CD8-positive, alpha-beta T cell (primary cell): ENCODE measurements at regions of chrX and their contacts with region 1.

Region 1: DNA sequence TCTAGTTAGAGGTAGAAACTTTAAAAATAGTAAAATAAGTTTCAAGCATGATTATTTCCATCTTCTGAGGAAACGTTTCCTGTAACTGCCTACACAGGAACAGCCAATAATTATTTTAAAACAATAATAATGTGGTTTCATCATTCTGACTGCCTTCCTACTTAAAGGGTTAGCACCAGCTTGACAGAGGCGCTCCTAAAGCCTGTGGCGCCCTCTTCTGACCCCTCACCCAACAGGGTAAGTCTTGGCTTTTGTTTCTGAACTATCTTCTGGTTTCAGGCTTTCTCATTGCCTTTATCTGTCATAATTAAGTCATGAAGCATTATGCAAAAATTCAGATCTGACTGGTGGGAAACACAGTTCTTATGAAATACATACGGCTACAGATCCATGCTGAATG is 96.7 kb downstream of the ITM2A start:
- DNase-seq: peak; percentile 47 to 86 (median 71)
- ATAC-seq: peak; percentile 94
- H3K4me3 ChIP-seq: no peak overlapping the region
- H3K4me3 Mint-ChIP-seq: no peak overlapping the region
- H3K27ac ChIP-seq: peak overlapping the region in 1 of 2 experiments; percentile 44
- H3K27ac Mint-ChIP-seq: peak overlapping the region; percentile 74
- H3K4me1 ChIP-seq: peaks cover 43% of the 10 kb centered on the region
- H3K4me1 Mint-ChIP-seq: peaks cover 44% of the 10 kb centered on the region
- H3K27me3 ChIP-seq: no peaks in the 10 kb centered on the region
- H3K27me3 Mint-ChIP-seq: no peaks in the 10 kb centered on the region
- CTCF ChIP-seq: peak; percentile 69

Region 2: DNA sequence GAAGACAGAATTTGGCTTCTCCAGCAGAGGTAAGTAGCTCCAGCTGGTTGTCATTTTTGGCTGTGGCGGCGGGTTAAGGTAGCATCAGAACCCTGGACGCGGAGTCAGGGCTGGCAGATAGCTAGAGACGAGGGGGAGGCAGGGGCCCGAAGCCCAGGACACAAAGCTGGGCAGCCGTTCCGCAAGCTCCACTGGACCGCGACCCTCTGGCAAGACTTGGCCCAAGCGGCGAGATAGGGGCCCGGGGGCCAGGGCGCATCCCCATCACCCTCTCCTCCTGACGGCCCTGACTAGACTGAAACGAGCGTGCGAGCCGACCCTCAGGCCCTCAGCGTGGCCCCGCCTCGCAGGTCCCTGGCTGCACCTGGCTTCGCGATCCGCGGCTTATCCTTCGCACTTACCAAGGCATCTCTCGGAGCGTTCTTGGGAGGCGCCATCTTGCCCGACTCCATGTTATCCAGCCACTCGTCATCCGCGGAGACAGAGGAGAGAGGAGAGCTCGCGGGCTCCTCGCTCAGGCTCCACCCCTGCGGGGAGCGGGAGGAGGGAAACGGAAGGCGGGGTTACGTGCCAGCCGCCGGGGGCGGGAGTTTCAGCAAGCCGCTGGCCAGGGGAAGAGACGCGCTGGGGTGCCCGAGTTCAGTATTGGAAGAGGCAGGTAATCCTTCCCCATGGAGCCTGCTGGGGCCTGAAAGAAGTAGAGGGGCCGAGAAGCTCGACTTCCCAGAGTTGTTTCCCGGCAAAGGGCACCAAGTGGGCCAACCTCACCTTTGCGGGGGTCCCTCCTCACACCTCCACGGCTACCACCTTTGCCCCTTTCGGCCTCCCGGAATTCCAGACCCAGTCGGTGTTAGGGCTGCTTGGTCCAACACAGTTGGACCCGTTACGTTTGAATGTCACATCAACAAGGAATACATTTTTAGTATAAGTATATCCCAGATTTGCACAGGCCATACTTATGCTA is 1131.0 kb before region 1 on chrX and contains the start of gene TAF9B:
- CTCF ChIA-PET with region 1: no interaction called
- POLR2A ChIA-PET with region 1: no interaction called
- intact Hi-C with region 1: loop called in 1 of 2 experiments (anchors 10 kb)
- DNase-seq: peak; percentile 68 to 89 (median 77)
- ATAC-seq: peak; percentile 97
- H3K4me3 ChIP-seq: peak within 1 kb of the TSS; percentile 73 to 93
- H3K4me3 Mint-ChIP-seq: peak within 1 kb of the TSS; percentile 93
- H3K27ac ChIP-seq: peak within 1 kb of the TSS; percentile 77 to 83
- H3K27ac Mint-ChIP-seq: peak within 1 kb of the TSS; percentile 92
- H3K4me1 ChIP-seq: no peaks in the 10 kb centered on the region
- H3K4me1 Mint-ChIP-seq: peaks cover 9% of the 10 kb centered on the region
- H3K27me3 ChIP-seq: no peaks in the 10 kb centered on the region
- H3K27me3 Mint-ChIP-seq: no peaks in the 10 kb centered on the region
- CTCF ChIP-seq: no peak
- total RNA-seq, gene TAF9B: 5.7 to 7.1 TPM

Region 3: GRCh38 chrX:78886550-78886949 is 383.9 kb before region 1 on chrX:
- CTCF ChIA-PET with region 1: no interaction called
- POLR2A ChIA-PET with region 1: no interaction called
- intact Hi-C with region 1: loop called in 1 of 2 experiments (anchors 5 kb)
- DNase-seq: peak in 2 of 9 experiments; percentile 16 to 43
- ATAC-seq: peak; percentile 54
- H3K4me3 ChIP-seq: no peak overlapping the region
- H3K4me3 Mint-ChIP-seq: no peak overlapping the region
- H3K27ac ChIP-seq: no peak overlapping the region
- H3K27ac Mint-ChIP-seq: peak overlapping the region; percentile 16
- H3K4me1 ChIP-seq: no peaks in the 10 kb centered on the region
- H3K4me1 Mint-ChIP-seq: peaks cover 6% of the 10 kb centered on the region
- H3K27me3 ChIP-seq: no peaks in the 10 kb centered on the region
- H3K27me3 Mint-ChIP-seq: no peaks in the 10 kb centered on the region
- CTCF ChIP-seq: peak; percentile 36

Region 4: GRCh38 chrX:79081895-79082512 is 188.4 kb before region 1 on chrX:
- CTCF ChIA-PET with region 1: interaction called, 4 read pairs
- POLR2A ChIA-PET with region 1: no interaction called
- intact Hi-C with region 1: loop called (anchors 1 to 5 kb)
- DNase-seq: peak in 6 of 9 experiments; percentile 6 to 79 (median 30)
- ATAC-seq: peak; percentile 89
- H3K4me3 ChIP-seq: no peak overlapping the region
- H3K4me3 Mint-ChIP-seq: peak overlapping the region; percentile 74
- H3K27ac ChIP-seq: peak overlapping the region in 1 of 2 experiments; percentile 9
- H3K27ac Mint-ChIP-seq: peak overlapping the region; percentile 94
- H3K4me1 ChIP-seq: peaks cover 27% of the 10 kb centered on the region
- H3K4me1 Mint-ChIP-seq: peaks cover 30% of the 10 kb centered on the region
- H3K27me3 ChIP-seq: no peaks in the 10 kb centered on the region
- H3K27me3 Mint-ChIP-seq: no peaks in the 10 kb centered on the region
- CTCF ChIP-seq: peak; percentile 54

Region 5: GRCh38 chrX:79146640-79147390 is 123.6 kb before region 1 on chrX:
- CTCF ChIA-PET with region 1: interaction called, 3 read pairs
- POLR2A ChIA-PET with region 1: interaction called, 4 read pairs
- intact Hi-C with region 1: loop called in 1 of 2 experiments (anchors 2 kb)
- DNase-seq: peak in 2 of 9 experiments; percentile 36 to 63
- ATAC-seq: peak; percentile 6
- H3K4me3 ChIP-seq: peak overlapping the region; percentile 73 to 83
- H3K4me3 Mint-ChIP-seq: peak overlapping the region; percentile 97
- H3K27ac ChIP-seq: peak overlapping the region; percentile 67 to 83
- H3K27ac Mint-ChIP-seq: peak overlapping the region; percentile 97
- H3K4me1 ChIP-seq: peaks cover 31% of the 10 kb centered on the region
- H3K4me1 Mint-ChIP-seq: peaks cover 35% of the 10 kb centered on the region
- H3K27me3 ChIP-seq: no peaks in the 10 kb centered on the region
- H3K27me3 Mint-ChIP-seq: no peaks in the 10 kb centered on the region
- CTCF ChIP-seq: no peak

Region 6: GRCh38 chrX:79281775-79282174 is 11.4 kb after region 1 on chrX:
- CTCF ChIA-PET with region 1: no interaction called
- POLR2A ChIA-PET with region 1: no interaction called
- intact Hi-C with region 1: no loop called
- DNase-seq: no peak
- ATAC-seq: no peak
- H3K4me3 ChIP-seq: no peak overlapping the region
- H3K4me3 Mint-ChIP-seq: no peak overlapping the region
- H3K27ac ChIP-seq: no peak overlapping the region
- H3K27ac Mint-ChIP-seq: no peak overlapping the region
- H3K4me1 ChIP-seq: no peaks in the 10 kb centered on the region
- H3K4me1 Mint-ChIP-seq: peaks cover 5% of the 10 kb centered on the region
- H3K27me3 ChIP-seq: no peaks in the 10 kb centered on the region
- H3K27me3 Mint-ChIP-seq: no peaks in the 10 kb centered on the region
- CTCF ChIP-seq: no peak

Region 7: DNA sequence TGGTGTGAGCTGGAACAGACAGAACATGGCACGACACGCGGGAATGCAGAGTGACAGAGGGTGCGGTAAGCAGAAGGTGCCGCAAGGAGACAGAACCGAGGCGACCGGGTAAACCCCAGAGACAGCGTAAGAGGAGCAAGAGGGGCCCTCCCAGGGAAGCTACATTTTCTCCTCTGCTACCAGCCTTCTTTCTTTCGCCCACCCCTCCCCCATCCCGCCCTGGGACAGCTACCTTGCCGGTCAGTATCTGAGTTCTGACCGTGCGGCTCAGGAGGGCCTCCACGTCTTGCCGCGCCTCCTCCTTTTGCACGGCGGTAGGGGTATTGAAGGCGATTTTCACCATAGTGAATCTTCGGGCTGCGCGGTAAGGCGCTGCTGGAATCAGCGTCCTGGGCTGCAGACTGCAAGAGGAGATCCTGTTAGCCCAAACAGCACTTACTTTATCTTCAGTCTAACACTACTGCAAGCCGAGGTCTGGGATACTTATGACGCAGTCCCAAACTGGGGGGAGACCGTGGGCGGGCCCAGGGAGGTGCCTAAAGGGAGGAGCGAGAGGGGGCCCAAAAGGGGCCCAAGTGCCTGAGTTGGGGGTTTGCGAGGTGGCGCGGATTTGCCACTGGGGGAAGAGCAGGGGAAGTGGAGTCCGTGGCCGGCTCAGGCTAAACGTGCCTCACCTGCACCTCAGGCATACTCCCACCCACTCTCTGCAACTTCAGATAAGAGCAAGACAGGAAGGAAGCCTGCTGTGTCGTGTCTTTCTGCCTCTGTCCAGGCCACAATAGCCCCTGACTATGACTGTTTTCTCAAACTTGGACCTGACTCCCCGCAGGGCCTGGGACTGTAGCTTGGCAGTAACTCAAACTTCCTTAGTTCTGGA is 96.7 kb after region 1 on chrX and contains the start of gene ITM2A:
- CTCF ChIA-PET with region 1: no interaction called
- POLR2A ChIA-PET with region 1: no interaction called
- intact Hi-C with region 1: loop called in 1 of 2 experiments (anchors 10 kb)
- DNase-seq: peak; percentile 27 to 81 (median 64)
- ATAC-seq: peak; percentile 80
- H3K4me3 ChIP-seq: peak within 1 kb of the TSS; percentile 54 to 85
- H3K4me3 Mint-ChIP-seq: peak within 1 kb of the TSS; percentile 95
- H3K27ac ChIP-seq: peak within 1 kb of the TSS; percentile 79 to 94
- H3K27ac Mint-ChIP-seq: peak within 1 kb of the TSS; percentile 97
- H3K4me1 ChIP-seq: peaks cover 18% of the 10 kb centered on the region
- H3K4me1 Mint-ChIP-seq: peaks cover 39% of the 10 kb centered on the region
- H3K27me3 ChIP-seq: no peaks in the 10 kb centered on the region
- H3K27me3 Mint-ChIP-seq: no peaks in the 10 kb centered on the region
- CTCF ChIP-seq: no peak
- total RNA-seq, gene ITM2A: 123 to 125 TPM